ENCODE measurements at regions of chr10 and their contacts with region 1.

Region 1: DNA sequence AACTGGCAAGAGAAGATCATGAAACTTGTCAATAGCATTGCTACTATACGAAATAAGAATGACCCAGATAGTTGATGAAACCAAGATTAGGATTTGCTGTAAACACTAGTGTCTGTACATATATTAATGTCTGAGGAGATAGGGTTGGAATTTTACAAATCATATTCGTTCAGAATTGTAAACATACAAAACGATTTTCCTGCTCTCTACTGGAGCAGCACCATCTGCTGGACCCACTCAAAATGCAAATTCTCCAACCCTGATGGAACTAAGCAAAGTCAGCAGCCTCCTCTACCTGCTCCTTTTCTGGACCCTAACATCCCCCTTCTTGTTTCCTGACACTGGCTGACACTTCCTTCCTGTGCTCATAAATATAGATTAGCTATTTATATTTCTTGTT is 29.4 kb upstream of the SGMS1 start:
- DNase-seq: peak in 3 of 4 experiments; percentile 24 to 62 (median 47)
- ATAC-seq: peak; percentile 75
- H3K4me3 ChIP-seq: no peak overlapping the region
- H3K27ac ChIP-seq: no peak overlapping the region
- H3K4me1 ChIP-seq: peaks cover 11 to 19% of the 10 kb centered on the region in 2 experiments; a peak in 4 of 5 replicates
- H3K27me3 ChIP-seq: no peaks in the 10 kb centered on the region
- CTCF ChIP-seq: peak; percentile 65 to 75 (median 65)
- EP300 ChIP-seq: no peak
- POLR2A ChIP-seq: no peak
- RAD21 ChIP-seq: peak; percentile 53 to 75

Region 2: GRCh38 chr10:49661218-49661856 is 991.8 kb before region 1 on chr10:
- CTCF ChIA-PET with region 1: no interaction called
- POLR2A ChIA-PET with region 1: no interaction called
- in situ Hi-C with region 1: no loop called
- intact Hi-C with region 1: no loop called
- DNase-seq: peak in 2 of 4 experiments; percentile 6 to 7
- ATAC-seq: no peak
- H3K4me3 ChIP-seq: no peak overlapping the region
- H3K27ac ChIP-seq: no peak overlapping the region
- H3K4me1 ChIP-seq: no peaks in the 10 kb centered on the region
- H3K27me3 ChIP-seq: peaks cover 0 to 29% of the 10 kb centered on the region in 2 experiments
- CTCF ChIP-seq: no peak
- EP300 ChIP-seq: no peak
- POLR2A ChIP-seq: no peak
- RAD21 ChIP-seq: no peak

Region 3: GRCh38 chr10:50291261-50291850 is 361.8 kb before region 1 on chr10:
- CTCF ChIA-PET with region 1: interaction called, 5 read pairs
- POLR2A ChIA-PET with region 1: no interaction called
- in situ Hi-C with region 1: no loop called
- intact Hi-C with region 1: loop called (anchors 5 kb)
- DNase-seq: peak; percentile 42 to 68 (median 60)
- ATAC-seq: peak; percentile 88
- H3K4me3 ChIP-seq: no peak overlapping the region
- H3K27ac ChIP-seq: no peak overlapping the region
- H3K4me1 ChIP-seq: peaks cover 9 to 16% of the 10 kb centered on the region in 2 experiments; a peak in 3 of 5 replicates
- H3K27me3 ChIP-seq: no peaks in the 10 kb centered on the region
- CTCF ChIP-seq: peak; percentile 74 to 89 (median 76)
- EP300 ChIP-seq: no peak
- POLR2A ChIP-seq: no peak
- RAD21 ChIP-seq: peak; percentile 91 to 97

Region 4: DNA sequence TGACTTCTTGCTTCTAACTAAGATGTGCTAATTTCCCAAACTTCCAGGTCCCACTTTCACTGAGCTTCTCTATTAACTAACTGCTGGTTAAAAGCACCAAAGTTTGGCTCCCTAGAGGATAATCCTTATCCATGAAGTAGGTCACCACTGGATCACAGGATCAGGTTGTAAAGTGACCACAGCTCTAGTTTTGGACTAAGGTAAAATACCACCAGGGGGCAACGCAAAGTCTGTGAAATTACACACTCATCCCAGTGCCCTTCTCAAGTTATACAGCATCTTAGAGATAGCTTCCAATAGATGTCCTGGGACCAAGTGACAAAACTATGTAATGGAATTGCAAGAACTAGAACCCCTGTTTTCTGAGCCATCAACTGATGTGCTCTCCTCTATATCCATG is 285.4 kb before region 1 on chr10:
- CTCF ChIA-PET with region 1: no interaction called
- POLR2A ChIA-PET with region 1: no interaction called
- in situ Hi-C with region 1: no loop called
- intact Hi-C with region 1: no loop called
- DNase-seq: peak; percentile 51 to 69 (median 58)
- ATAC-seq: peak; percentile 75
- H3K4me3 ChIP-seq: no peak overlapping the region
- H3K27ac ChIP-seq: no peak overlapping the region
- H3K4me1 ChIP-seq: peaks cover 4 to 28% of the 10 kb centered on the region in 2 experiments; a peak in 4 of 5 replicates
- H3K27me3 ChIP-seq: no peaks in the 10 kb centered on the region
- CTCF ChIP-seq: peak; percentile 44 to 64 (median 61); a peak in 5 of 6 replicates
- EP300 ChIP-seq: no peak
- POLR2A ChIP-seq: no peak
- RAD21 ChIP-seq: peak; percentile 58 to 75

Region 5: DNA sequence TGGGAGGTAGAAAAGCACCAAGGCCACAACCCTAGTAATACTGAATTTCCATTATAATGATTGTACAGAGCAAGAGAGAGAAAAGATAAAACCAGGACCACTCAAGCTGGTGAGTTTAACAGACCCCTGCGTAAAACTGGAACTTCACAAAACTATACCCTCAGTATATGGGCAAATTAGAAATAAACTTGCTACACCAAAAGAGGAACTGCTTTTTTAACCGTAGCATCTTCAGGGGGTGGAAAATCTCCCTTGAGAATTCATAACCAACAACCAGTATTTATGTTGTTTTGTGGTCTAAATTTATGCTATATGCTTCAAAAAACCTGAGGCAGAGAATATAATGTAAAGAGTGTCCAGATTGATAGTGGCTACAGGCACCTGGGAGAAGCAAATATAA is 200.5 kb before region 1 on chr10:
- CTCF ChIA-PET with region 1: no interaction called
- POLR2A ChIA-PET with region 1: no interaction called
- in situ Hi-C with region 1: loop called (anchors 10 kb)
- intact Hi-C with region 1: no loop called
- DNase-seq: no peak
- ATAC-seq: no peak
- H3K4me3 ChIP-seq: no peak overlapping the region
- H3K27ac ChIP-seq: no peak overlapping the region
- H3K4me1 ChIP-seq: no peaks in the 10 kb centered on the region
- H3K27me3 ChIP-seq: no peaks in the 10 kb centered on the region
- CTCF ChIP-seq: no peak
- EP300 ChIP-seq: no peak
- POLR2A ChIP-seq: no peak
- RAD21 ChIP-seq: no peak

Region 6: GRCh38 chr10:50636618-50637579 is 16.2 kb before region 1 on chr10:
- CTCF ChIA-PET with region 1: no interaction called
- POLR2A ChIA-PET with region 1: interaction called, 17 read pairs
- in situ Hi-C with region 1: no loop called
- intact Hi-C with region 1: no loop called
- DNase-seq: no peak
- ATAC-seq: no peak
- H3K4me3 ChIP-seq: no peak overlapping the region
- H3K27ac ChIP-seq: no peak overlapping the region
- H3K4me1 ChIP-seq: peaks cover 0 to 3% of the 10 kb centered on the region in 2 experiments; a peak in 3 of 5 replicates
- H3K27me3 ChIP-seq: no peaks in the 10 kb centered on the region; a peak in 2 of 5 replicates
- CTCF ChIP-seq: no peak
- EP300 ChIP-seq: no peak
- POLR2A ChIP-seq: no peak
- RAD21 ChIP-seq: no peak

Measured in K562 (cell line).